ENCODE measurements at regions of chr12 and their contacts with region 1.

Region 1: DNA sequence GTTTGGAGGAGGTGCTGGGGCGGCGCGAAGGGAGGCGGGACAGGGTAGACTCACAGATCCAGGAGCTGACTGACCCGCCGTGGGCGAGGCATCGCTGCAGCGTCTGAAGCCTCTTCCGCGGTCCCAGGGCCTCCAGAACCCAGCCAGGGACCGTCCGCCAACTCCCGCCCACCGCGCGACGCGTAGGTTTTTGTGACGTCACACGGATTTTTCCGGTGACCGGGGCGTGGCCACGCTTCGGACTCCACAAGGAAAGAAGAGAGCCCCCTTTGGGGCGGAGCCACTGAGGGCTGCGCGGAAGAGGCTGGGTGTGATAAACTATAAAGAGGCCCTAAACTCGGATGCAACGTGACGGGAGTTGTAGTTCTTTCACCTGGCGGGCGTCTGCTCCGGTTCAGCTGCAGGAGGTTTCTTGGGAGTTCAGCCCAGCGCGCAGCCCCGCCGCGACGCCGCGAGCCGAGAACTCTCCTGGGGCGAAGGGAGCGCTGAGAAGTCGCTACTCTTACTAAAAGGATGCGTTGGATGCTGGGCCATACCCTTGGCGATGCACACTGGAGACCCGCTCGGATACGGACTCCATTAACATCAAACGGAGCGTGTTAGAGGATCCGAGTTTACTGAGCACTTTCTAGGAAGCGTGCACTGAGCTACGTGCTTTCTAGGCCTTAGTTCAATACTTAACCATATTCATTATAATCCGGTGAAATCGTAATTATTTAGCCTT is at the start of gene AMN1:
- DNase-seq: peak; percentile 100
- ATAC-seq: peak; percentile 87
- H3K4me3 ChIP-seq: peak within 1 kb of the TSS; percentile 74 to 99 (median 85)
- H3K4me3 Mint-ChIP-seq: peak within 1 kb of the TSS; percentile 98
- H3K27ac ChIP-seq: peak within 1 kb of the TSS; percentile 94 to 96
- H3K27ac Mint-ChIP-seq: peak within 1 kb of the TSS; percentile 98
- H3K4me1 ChIP-seq: peaks cover 38 to 41% of the 10 kb centered on the region in 2 donors
- H3K4me1 Mint-ChIP-seq: peaks cover 73% of the 10 kb centered on the region
- H3K27me3 ChIP-seq: no peaks in the 10 kb centered on the region
- H3K27me3 Mint-ChIP-seq: no peaks in the 10 kb centered on the region
- CTCF ChIP-seq: no peak
- total RNA-seq, gene AMN1: 30.4 and 32.6 TPM in 2 replicates

Region 2: GRCh38 chr12:31325877-31326631 is 403.0 kb before region 1 on chr12 and contains the start of gene SINHCAF:
- CTCF ChIA-PET with region 1: no interaction called
- POLR2A ChIA-PET with region 1: no interaction called
- intact Hi-C with region 1: loop called (anchors 2 kb)
- DNase-seq: peak; percentile 99
- ATAC-seq: peak; percentile 64
- H3K4me3 ChIP-seq: peak within 1 kb of the TSS; percentile 70 to 96 (median 93)
- H3K4me3 Mint-ChIP-seq: peak within 1 kb of the TSS; percentile 98
- H3K27ac ChIP-seq: peak within 1 kb of the TSS; percentile 97
- H3K27ac Mint-ChIP-seq: peak within 1 kb of the TSS; percentile 99
- H3K4me1 ChIP-seq: peaks cover 27 to 36% of the 10 kb centered on the region in 2 donors
- H3K4me1 Mint-ChIP-seq: peaks cover 39% of the 10 kb centered on the region
- H3K27me3 ChIP-seq: no peaks in the 10 kb centered on the region
- H3K27me3 Mint-ChIP-seq: no peaks in the 10 kb centered on the region
- CTCF ChIP-seq: no peak
- total RNA-seq, gene SINHCAF: 127 and 129 TPM in 2 replicates

Region 3: DNA sequence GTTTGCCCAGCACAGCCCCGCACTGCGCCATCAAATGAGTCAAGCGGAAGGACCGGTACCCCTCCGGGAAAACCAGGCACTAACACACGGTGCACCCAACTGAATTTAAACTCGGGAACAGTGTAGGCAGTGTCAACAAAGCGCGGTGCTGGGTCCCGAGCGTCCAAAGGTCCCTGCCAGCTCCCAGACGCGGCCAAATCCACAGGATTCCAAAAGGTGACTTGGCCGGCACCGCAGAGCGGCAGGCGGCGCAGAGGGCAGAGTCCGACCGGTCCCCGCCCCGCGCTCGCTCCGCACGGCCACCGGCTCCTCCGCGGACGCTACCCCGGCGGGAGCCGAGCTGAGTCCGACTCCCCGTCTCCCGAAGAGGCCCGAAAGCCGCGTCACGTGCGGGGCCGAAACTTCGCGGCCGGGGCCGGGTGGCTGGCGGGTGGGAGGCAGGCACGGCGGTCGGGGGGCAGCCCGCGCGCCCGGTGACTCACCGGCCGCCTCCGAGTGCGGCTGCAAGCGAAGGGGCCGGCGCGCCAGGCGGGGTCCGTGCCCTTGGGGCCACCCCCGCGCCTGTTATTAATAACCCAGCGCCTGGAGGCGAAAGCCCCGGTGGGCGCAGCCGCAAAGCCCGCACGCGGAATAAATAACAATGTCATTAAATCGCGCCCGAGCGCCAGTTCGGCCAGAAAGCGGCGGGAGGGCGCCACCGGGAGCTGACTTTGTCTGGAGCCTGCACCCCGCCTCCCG is 139.0 kb before region 1 on chr12:
- CTCF ChIA-PET with region 1: no interaction called
- POLR2A ChIA-PET with region 1: no interaction called
- intact Hi-C with region 1: loop called (anchors 10 kb)
- DNase-seq: peak; percentile 78
- ATAC-seq: peak; percentile 29
- H3K4me3 ChIP-seq: peak overlapping the region; percentile 65 to 95 (median 78)
- H3K4me3 Mint-ChIP-seq: peak overlapping the region; percentile 96
- H3K27ac ChIP-seq: peak overlapping the region; percentile 85 to 94
- H3K27ac Mint-ChIP-seq: peak overlapping the region; percentile 99
- H3K4me1 ChIP-seq: peaks cover 49 to 56% of the 10 kb centered on the region in 2 donors
- H3K4me1 Mint-ChIP-seq: peaks cover 59% of the 10 kb centered on the region
- H3K27me3 ChIP-seq: no peaks in the 10 kb centered on the region
- H3K27me3 Mint-ChIP-seq: no peaks in the 10 kb centered on the region
- CTCF ChIP-seq: no peak

Region 4: DNA sequence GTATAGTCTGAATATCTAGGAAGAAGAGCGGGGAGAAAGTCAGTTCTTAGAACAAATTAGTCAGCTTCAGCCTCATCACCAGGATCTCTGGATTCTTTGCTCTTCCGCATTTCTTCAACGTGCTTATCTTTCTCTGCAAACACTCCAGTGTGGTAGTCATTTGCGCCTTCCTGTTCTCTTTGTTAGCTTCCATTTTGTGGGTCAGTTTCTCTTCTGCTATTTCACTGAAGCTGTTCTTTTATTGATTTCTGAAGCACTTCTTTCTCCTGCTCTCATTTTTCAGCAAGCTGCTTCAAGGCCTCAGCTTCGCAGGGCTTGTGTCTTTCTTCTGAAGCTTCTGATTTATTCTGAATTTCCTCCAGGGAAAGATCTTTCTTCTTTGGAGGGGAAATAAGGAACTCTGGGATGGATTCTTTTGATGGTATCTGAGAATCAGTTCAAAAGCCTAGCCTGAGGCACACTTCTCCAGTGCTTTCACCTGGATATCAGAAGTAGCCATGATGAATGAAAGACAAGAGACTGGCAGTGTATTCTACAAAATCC is 13.7 kb before region 1 on chr12:
- CTCF ChIA-PET with region 1: interaction called, 19 read pairs
- POLR2A ChIA-PET with region 1: interaction called, 14 read pairs
- intact Hi-C with region 1: loop called (anchors 1 kb)
- DNase-seq: peak; percentile 83
- ATAC-seq: peak; percentile 96
- H3K4me3 ChIP-seq: peak overlapping the region; percentile 32 to 60 (median 53)
- H3K4me3 Mint-ChIP-seq: peak overlapping the region; percentile 51
- H3K27ac ChIP-seq: peak overlapping the region; percentile 88 to 90
- H3K27ac Mint-ChIP-seq: peak overlapping the region; percentile 87
- H3K4me1 ChIP-seq: peaks cover 32 to 37% of the 10 kb centered on the region in 2 donors
- H3K4me1 Mint-ChIP-seq: peaks cover 54% of the 10 kb centered on the region
- H3K27me3 ChIP-seq: no peaks in the 10 kb centered on the region
- H3K27me3 Mint-ChIP-seq: no peaks in the 10 kb centered on the region
- CTCF ChIP-seq: no peak

Region 5: DNA sequence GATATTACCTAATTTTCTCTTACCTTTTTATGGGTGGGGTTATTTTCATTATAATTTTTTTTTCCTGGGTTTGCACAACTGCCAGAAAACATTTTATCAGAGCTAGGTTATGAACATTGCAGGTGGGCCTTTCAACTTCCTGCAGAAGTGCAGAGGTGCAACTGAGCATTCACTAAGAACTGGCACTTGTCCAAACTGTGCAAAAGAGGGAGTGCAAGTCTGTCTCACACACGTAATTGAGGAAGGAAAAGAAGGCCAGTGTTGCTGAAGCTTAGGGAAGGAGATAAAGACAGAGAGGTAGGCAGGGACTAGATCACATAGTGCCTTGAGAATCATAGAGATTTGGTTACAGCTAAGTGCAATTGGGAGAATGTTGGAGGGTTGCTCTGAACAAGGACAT is 13.8 kb after region 1 on chr12:
- CTCF ChIA-PET with region 1: interaction called, 8 read pairs
- POLR2A ChIA-PET with region 1: interaction called, 37 read pairs
- intact Hi-C with region 1: loop called (anchors 1 kb)
- DNase-seq: peak; percentile 86
- ATAC-seq: peak; percentile 64
- H3K4me3 ChIP-seq: peak overlapping the region in 1 of 5 experiments; percentile 21
- H3K4me3 Mint-ChIP-seq: peak overlapping the region; percentile 35
- H3K27ac ChIP-seq: peak overlapping the region; percentile 2 to 68
- H3K27ac Mint-ChIP-seq: peak overlapping the region; percentile 69
- H3K4me1 ChIP-seq: peaks cover 80 to 81% of the 10 kb centered on the region in 2 donors
- H3K4me1 Mint-ChIP-seq: peaks cover 77% of the 10 kb centered on the region
- H3K27me3 ChIP-seq: no peaks in the 10 kb centered on the region
- H3K27me3 Mint-ChIP-seq: no peaks in the 10 kb centered on the region
- CTCF ChIP-seq: no peak

Region 6: GRCh38 chr12:31749024-31749704 is 20.1 kb after region 1 on chr12:
- CTCF ChIA-PET with region 1: interaction called, 8 read pairs
- POLR2A ChIA-PET with region 1: interaction called, 37 read pairs
- intact Hi-C with region 1: loop called (anchors 1 kb)
- DNase-seq: peak; percentile 67
- ATAC-seq: peak; percentile 70
- H3K4me3 ChIP-seq: peak overlapping the region in 2 of 5 experiments; percentile 1 to 26
- H3K4me3 Mint-ChIP-seq: peak overlapping the region; percentile 79
- H3K27ac ChIP-seq: peak overlapping the region; percentile 50 to 76
- H3K27ac Mint-ChIP-seq: peak overlapping the region; percentile 87
- H3K4me1 ChIP-seq: peaks cover 73 to 76% of the 10 kb centered on the region in 2 donors
- H3K4me1 Mint-ChIP-seq: peaks cover 72% of the 10 kb centered on the region
- H3K27me3 ChIP-seq: no peaks in the 10 kb centered on the region
- H3K27me3 Mint-ChIP-seq: no peaks in the 10 kb centered on the region
- CTCF ChIP-seq: no peak

Region 7: GRCh38 chr12:31959161-31959700 is 230.2 kb after region 1 on chr12 and contains the start of gene RESF1:
- CTCF ChIA-PET with region 1: interaction called, 4 read pairs
- POLR2A ChIA-PET with region 1: interaction called, 17 read pairs
- intact Hi-C with region 1: loop called (anchors 1 kb)
- DNase-seq: peak; percentile 91
- ATAC-seq: peak; percentile 85
- H3K4me3 ChIP-seq: peak within 1 kb of the TSS; percentile 65 to 98 (median 70)
- H3K4me3 Mint-ChIP-seq: peak within 1 kb of the TSS; percentile 96
- H3K27ac ChIP-seq: peak within 1 kb of the TSS; percentile 79 to 82
- H3K27ac Mint-ChIP-seq: peak within 1 kb of the TSS; percentile 96
- H3K4me1 ChIP-seq: peaks cover 49 to 50% of the 10 kb centered on the region in 2 donors
- H3K4me1 Mint-ChIP-seq: peaks cover 68% of the 10 kb centered on the region
- H3K27me3 ChIP-seq: no peaks in the 10 kb centered on the region
- H3K27me3 Mint-ChIP-seq: no peaks in the 10 kb centered on the region
- CTCF ChIP-seq: no peak
- total RNA-seq, gene RESF1: 350 and 352 TPM in 2 replicates

Measured in B cell (primary cell).